CD4-positive, alpha-beta T cell (primary cell): ENCODE measurements at regions of chr2 and their contacts with region 1.

Region 1: DNA sequence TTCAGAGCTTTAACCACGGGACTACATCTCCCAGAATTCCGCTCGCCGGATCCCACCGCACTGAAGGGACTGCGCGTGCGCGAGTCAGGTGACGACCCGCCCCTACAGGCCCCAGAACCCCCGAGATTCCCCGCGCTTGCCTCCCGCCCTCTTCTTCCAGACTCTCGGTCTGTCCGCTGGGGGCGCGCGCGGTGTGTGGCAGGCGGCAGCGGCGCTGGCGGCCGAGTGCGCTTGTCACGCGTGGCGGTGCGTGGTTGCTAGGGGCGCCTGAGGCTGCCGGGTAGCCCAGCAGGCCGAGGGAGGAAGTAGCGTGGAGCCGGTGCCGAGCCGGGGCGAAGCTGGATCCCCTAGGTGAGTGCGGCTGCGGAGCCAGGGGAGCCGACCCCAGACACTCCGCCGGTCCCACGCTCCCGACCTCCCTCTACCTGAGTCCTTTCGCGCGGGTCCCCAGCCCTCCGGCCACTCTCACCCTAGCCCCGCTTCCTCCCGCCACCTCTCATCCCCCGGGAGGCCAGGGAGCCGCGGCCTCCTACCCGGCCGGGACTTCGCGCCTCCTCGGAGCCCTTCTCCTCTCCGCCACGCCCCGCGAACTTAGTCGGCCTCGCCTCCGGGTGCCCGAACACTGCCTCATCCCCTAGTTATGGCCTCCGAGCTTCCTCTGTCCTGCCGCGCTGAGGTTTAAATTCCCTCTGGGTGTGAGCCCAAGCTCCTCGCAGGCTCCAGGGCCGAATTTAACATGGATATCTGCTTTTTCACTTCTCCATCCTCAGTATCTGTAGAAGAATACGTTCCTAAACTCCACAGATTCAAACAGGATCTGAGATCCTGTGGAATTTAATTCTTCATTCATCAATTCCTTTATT is at the start of gene TTLL4:
- DNase-seq: peak; percentile 97 to 99 (median 99)
- ATAC-seq: peak; percentile 98
- H3K4me3 ChIP-seq: peak within 1 kb of the TSS; percentile 96
- H3K4me3 Mint-ChIP-seq: peak within 1 kb of the TSS; percentile 99
- H3K27ac ChIP-seq: peak within 1 kb of the TSS; percentile 66 to 87
- H3K27ac Mint-ChIP-seq: peak within 1 kb of the TSS; percentile 91
- H3K4me1 ChIP-seq: peaks cover 22% of the 10 kb centered on the region
- H3K4me1 Mint-ChIP-seq: peaks cover 26% of the 10 kb centered on the region
- H3K27me3 ChIP-seq: peaks cover 0 to 6% of the 10 kb centered on the region in 2 experiments
- H3K27me3 Mint-ChIP-seq: peaks cover 10% of the 10 kb centered on the region
- CTCF ChIP-seq: peak; percentile 87
- total RNA-seq, gene TTLL4: 7.3 to 10.8 TPM

Region 2: GRCh38 chr2:218323809-218324521 is 387.0 kb before region 1 on chr2:
- CTCF ChIA-PET with region 1: no interaction called
- POLR2A ChIA-PET with region 1: no interaction called
- intact Hi-C with region 1: no loop called
- DNase-seq: peak in 2 of 14 experiments; percentile 26 to 27
- ATAC-seq: no peak
- H3K4me3 ChIP-seq: peak overlapping the region; percentile 50
- H3K4me3 Mint-ChIP-seq: peak overlapping the region; percentile 87
- H3K27ac ChIP-seq: no peak overlapping the region
- H3K27ac Mint-ChIP-seq: peak overlapping the region; percentile 76
- H3K4me1 ChIP-seq: peaks cover 47% of the 10 kb centered on the region
- H3K4me1 Mint-ChIP-seq: peaks cover 58% of the 10 kb centered on the region
- H3K27me3 ChIP-seq: no peaks in the 10 kb centered on the region
- H3K27me3 Mint-ChIP-seq: no peaks in the 10 kb centered on the region
- CTCF ChIP-seq: no peak

Region 3: GRCh38 chr2:218671654-218672566 is 39.0 kb before region 1 on chr2 and contains the starts of genes RNF25 and STK36:
- CTCF ChIA-PET with region 1: interaction called, 20 read pairs
- POLR2A ChIA-PET with region 1: interaction called, 15 read pairs
- intact Hi-C with region 1: loop called (anchors 1 to 5 kb)
- DNase-seq: peak; percentile 69 to 92 (median 77)
- ATAC-seq: peak; percentile 93
- H3K4me3 ChIP-seq: peak within 1 kb of the TSS; percentile 81
- H3K4me3 Mint-ChIP-seq: peak within 1 kb of the TSS; percentile 98
- H3K27ac ChIP-seq: peak within 1 kb of the TSS; percentile 54 to 81
- H3K27ac Mint-ChIP-seq: peak within 1 kb of the TSS; percentile 96
- H3K4me1 ChIP-seq: peaks cover 17% of the 10 kb centered on the region
- H3K4me1 Mint-ChIP-seq: peaks cover 25% of the 10 kb centered on the region
- H3K27me3 ChIP-seq: no peaks in the 10 kb centered on the region
- H3K27me3 Mint-ChIP-seq: no peaks in the 10 kb centered on the region
- CTCF ChIP-seq: no peak
- total RNA-seq, gene RNF25: 18.0 to 18.6 TPM
- total RNA-seq, gene STK36: 9.8 to 12.7 TPM

Region 4: DNA sequence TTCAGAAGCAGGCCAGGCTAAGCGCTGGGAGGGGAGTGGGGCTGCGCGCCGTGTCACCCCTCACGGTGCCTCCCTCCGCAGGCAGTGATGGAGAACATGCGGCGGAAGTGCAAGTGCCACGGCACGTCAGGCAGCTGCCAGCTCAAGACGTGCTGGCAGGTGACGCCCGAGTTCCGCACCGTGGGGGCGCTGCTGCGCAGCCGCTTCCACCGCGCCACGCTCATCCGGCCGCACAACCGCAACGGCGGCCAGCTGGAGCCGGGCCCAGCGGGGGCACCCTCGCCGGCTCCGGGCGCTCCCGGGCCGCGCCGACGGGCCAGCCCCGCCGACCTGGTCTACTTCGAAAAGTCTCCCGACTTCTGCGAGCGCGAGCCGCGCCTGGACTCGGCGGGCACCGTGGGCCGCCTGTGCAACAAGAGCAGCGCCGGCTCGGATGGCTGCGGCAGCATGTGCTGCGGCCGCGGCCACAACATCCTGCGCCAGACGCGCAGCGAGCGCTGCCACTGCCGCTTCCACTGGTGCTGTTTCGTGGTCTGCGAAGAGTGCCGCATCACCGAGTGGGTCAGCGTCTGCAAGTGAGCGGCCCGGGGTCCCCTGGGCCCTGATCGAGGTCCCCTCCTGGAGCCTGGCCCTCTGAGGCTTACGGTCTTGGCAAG is 181.9 kb after region 1 on chr2:
- CTCF ChIA-PET with region 1: interaction called, 4 read pairs
- POLR2A ChIA-PET with region 1: interaction called, 3 read pairs
- intact Hi-C with region 1: loop called in 1 of 2 experiments (anchors 5 kb)
- DNase-seq: peak; percentile 73 to 97 (median 84)
- ATAC-seq: peak; percentile 73
- H3K4me3 ChIP-seq: peak overlapping the region; percentile 56
- H3K4me3 Mint-ChIP-seq: peak overlapping the region; percentile 82
- H3K27ac ChIP-seq: peak overlapping the region; percentile 83 to 91
- H3K27ac Mint-ChIP-seq: peak overlapping the region; percentile 91
- H3K4me1 ChIP-seq: peaks cover 65% of the 10 kb centered on the region
- H3K4me1 Mint-ChIP-seq: peaks cover 50% of the 10 kb centered on the region
- H3K27me3 ChIP-seq: no peaks in the 10 kb centered on the region
- H3K27me3 Mint-ChIP-seq: no peaks in the 10 kb centered on the region
- CTCF ChIP-seq: peak; percentile 45